Activated B cell treated with CpG ODN at 0.5 μM for 24 hours (primary cell): ENCODE measurements at regions of chr14 and their contacts with region 1.

Region 1: GRCh38 chr14:51979088-51979709 is 10.1 kb upstream of the RTRAF start:
- DNase-seq: peak; percentile 68
- ATAC-seq: peak; percentile 75
- H3K4me3 Mint-ChIP-seq: no peak overlapping the region
- H3K27ac Mint-ChIP-seq: no peak overlapping the region
- H3K4me1 Mint-ChIP-seq: peaks cover 6% of the 10 kb centered on the region
- H3K27me3 Mint-ChIP-seq: no peaks in the 10 kb centered on the region
- CTCF ChIP-seq: peak; percentile 37

Region 2: DNA sequence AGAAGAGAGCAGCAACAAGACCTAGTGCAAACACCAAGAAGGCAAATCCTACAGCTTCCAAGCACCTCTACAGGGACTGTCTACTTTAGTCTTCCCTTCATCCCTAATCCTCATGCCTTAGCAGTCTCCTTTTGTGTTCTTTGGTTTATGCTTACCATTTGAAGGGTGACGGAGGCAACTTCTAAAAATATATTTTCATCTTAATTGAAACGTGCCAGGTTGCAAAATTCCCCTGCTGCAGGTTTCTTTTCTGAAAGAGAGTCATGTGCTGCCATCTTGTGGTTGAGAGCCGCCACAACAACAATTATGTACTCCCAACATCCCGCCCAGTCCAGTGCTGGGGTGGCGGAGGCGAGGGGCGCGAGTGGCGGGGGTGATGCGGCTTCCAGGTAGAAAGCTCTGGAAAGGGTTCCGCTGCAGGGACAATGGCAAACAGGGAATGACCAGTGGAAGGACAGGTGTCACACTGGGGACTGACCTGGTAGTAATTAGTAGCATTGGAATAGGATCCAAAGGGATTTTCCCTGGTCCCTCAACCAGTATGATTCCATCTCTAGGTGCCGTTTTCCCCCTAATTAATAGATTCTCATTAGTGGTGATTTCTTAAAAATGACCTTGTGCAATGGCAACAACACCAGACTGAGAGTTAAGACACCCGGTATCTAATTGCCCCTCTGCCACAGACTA is 199.1 kb before region 1 on chr14:
- CTCF ChIA-PET with region 1: interaction called, 42 read pairs
- POLR2A ChIA-PET with region 1: no interaction called
- intact Hi-C with region 1: loop called (anchors 1 kb)
- DNase-seq: peak; percentile 46
- ATAC-seq: peak; percentile 85
- H3K4me3 Mint-ChIP-seq: no peak overlapping the region
- H3K27ac Mint-ChIP-seq: no peak overlapping the region
- H3K4me1 Mint-ChIP-seq: peaks cover 9% of the 10 kb centered on the region
- H3K27me3 Mint-ChIP-seq: peaks cover 21% of the 10 kb centered on the region
- CTCF ChIP-seq: peak; percentile 89

Region 3: DNA sequence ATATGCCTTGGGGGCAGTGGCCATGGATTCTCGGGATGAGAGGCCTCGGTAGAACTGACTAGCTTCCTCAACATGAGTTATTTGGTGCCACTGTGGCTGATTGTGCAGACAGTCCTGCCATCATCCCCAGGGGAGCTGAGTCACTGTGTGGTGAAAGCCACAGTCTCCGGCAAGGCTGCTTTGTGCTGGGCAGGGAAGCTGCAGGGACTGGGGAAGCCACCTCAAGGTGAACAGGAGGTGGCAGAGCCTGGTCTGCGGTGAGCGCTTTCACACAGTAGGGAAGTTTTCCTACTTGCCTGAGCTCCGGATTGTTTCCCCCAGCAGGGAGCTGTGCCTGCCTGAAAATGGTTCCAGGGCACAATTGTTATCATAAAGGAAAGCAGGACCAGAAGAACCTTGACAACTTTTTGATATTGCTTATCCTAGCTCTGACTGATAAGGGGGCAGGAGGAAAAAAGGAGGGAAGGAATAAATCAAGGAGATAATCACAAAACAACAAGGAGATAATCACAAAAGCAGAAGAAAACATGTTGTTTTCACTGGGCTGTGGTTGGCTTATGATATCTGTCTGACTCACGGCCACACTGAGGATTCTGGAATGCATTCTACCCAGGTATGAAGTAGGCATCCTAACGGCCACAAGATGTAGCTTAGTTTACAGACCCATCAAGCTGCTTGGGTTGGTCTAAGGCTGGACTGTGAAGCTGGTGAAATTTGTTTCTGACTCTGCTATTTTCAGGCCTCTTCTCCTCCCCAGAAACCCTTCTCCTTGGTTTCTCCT is 151.0 kb before region 1 on chr14:
- CTCF ChIA-PET with region 1: interaction called, 42 read pairs
- POLR2A ChIA-PET with region 1: no interaction called
- intact Hi-C with region 1: loop called (anchors 1 kb)
- DNase-seq: peak; percentile 64
- ATAC-seq: peak; percentile 99
- H3K4me3 Mint-ChIP-seq: no peak overlapping the region
- H3K27ac Mint-ChIP-seq: peak overlapping the region; percentile 6
- H3K4me1 Mint-ChIP-seq: no peaks in the 10 kb centered on the region
- H3K27me3 Mint-ChIP-seq: no peaks in the 10 kb centered on the region
- CTCF ChIP-seq: no peak

Region 4: DNA sequence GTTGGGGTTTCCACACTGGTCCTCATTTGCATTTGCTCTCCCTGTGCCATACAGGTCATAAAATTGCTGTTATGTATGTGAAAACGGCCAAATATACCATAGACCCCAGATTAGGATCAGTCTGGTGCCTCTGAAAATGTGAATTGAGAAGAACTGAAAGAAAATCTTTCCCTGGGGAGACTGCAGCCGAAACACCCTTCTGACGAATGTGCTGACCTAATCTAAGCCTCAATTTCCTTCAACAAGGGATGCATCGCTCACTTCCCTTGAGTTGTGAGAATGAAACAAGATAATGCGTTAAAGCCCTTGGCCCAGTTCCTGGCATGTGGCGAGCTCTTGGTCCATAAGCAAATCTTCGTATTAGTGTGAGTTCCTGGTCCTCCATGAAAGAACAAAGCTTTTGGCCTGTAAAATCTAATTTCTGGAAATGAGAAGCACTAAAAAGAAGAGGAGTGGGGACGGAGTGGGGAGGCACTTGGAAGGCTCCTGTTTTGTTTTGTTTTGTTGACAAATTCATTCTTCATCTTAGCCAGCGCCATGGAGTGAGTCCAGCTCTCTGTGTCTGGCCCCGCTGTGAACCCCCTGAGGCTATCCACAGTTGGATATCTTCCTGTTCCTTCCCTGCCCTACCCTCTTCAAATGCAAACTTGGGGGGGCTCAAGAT is 39.3 kb before region 1 on chr14:
- CTCF ChIA-PET with region 1: no interaction called
- POLR2A ChIA-PET with region 1: no interaction called
- intact Hi-C with region 1: loop called (anchors 5 kb)
- DNase-seq: no peak
- ATAC-seq: peak; percentile 85
- H3K4me3 Mint-ChIP-seq: peak overlapping the region; percentile 54
- H3K27ac Mint-ChIP-seq: peak overlapping the region; percentile 85
- H3K4me1 Mint-ChIP-seq: peaks cover 31% of the 10 kb centered on the region
- H3K27me3 Mint-ChIP-seq: no peaks in the 10 kb centered on the region
- CTCF ChIP-seq: no peak